Posterior vena cava (tissue), 2 donors: ENCODE measurements at regions of chr6 and their contacts with region 1.

Region 1: DNA sequence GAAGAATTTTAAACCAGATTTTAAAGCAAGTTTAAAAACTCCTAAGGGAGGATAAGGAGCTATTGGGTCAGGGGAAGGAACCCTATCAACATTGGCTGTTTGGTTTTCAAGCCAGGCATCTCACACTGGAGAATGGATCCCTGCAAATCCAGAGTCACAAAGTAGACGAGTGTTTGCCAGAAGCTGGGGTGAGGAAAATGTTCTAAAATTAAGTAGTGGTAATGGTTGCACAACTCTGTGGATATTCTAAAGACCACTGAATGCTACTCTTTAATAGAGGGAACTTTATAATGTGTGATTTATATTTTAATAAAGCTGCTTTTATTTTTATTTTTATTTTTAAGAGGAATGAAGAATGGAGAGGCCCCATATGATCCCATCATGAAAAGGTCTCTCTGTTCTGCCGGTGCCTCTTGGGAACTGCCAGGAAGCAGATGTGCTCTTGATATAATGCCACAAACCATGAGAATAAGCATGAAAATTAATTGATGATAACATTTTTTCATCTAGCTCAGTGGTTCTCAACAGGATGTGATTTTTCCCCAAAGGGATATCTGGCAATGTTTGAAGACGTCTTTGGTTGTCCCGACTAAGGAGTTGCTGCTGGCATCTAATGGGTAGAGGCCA is 379.0 kb upstream of the CNR1 start:
- DNase-seq: no peak

Region 2: GRCh38 chr6:88502391-88502790 is 42.7 kb before region 1 on chr6:
- intact Hi-C with region 1: no loop called
- DNase-seq: no peak

Region 3: DNA sequence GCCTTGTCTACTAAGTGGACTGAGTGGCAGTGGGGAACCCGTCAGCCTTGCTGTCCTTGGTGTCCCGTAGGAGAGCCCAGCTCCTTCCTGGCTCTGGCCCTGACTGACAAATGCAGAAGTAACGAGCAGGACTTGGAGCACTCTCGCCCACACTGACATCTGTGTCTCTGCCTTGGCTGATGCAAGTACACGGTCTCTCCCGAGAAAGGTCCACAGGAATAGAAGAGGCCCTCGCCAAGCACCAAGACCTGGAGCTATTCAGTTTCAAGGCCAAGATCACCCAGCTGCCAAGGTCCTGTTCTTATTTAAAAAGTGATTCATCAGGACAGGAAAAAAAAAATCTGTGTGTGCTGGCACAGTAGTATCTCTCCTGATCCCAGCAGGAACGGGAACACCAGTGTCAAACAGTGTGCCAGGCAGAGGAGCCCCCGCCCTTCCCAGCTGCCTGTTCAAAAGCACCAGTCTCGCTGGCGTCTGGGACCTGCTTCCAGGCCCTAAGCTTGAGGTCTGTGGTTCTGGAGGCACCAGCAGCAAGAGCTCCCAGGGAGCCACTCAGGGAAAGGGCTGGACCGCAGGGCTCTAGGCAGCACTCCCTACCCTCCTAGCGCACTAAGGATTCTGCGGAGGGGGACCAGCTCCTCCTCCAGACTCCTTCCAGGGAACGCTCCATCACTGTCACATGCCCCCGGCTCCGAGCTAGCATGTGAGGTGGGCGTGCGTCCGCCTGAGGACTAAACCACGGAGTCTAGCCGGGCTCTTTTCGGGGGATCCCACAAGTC is 41.5 kb after region 1 on chr6:
- intact Hi-C with region 1: loop called in 1 of 2 experiments (anchors 1 kb)
- DNase-seq: no peak